PC-9 (cell line): ENCODE measurements at regions of chr5 and their contacts with region 1.

Region 1: DNA sequence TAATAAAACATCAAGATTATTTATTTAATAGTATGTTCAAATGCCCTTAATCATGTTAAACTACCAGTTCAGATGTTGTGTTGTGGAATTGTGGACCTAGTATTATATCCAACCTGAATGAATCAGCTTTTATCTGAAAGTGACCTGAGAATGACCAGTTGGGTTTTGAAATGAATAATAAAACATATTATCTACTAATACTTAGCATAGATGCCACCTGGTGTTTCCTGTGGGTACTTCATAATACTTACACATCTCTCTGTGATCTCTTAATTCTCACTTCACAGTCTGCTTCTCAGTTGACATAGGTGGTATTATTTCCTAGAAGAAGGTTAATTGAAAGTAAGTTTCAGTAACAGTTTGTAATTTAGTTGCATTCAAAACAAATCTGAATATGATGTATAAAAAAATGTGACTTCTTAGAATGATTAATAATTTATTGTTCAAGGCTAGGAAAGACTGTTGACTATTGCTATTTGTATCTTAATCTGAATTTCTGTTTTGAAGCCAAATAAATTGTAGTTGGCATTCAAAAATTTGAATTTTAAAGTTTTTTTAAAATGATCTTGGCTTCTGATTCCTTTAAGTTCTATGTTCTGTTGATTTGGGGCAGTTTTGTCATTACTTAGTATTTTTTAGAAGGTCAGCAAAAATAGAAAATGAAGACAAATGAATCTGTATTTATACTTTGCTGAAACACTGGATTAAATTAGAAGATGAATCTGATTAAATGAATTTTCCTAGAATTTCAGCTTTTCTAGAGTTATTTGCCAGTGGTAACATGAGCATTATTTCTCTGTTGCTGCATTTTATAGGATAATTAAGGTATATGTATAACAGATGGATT is 48.2 kb downstream of the KIF2A start:
- DNase-seq: peak in 1 of 2 experiments; percentile 7
- H3K4me3 ChIP-seq: no peak overlapping the region
- H3K27ac ChIP-seq: peak overlapping the region; percentile 47
- H3K4me1 ChIP-seq: no peaks in the 10 kb centered on the region; the same call in 1 of the 2 replicates
- H3K27me3 ChIP-seq: no peaks in the 10 kb centered on the region
- CTCF ChIP-seq: peak; percentile 78

Region 2: GRCh38 chr5:60699530-60700382 is 1654.5 kb before region 1 on chr5 and contains the start of gene DEPDC1B:
- CTCF ChIA-PET with region 1: no interaction called
- POLR2A ChIA-PET with region 1: interaction called, 14 read pairs
- intact Hi-C with region 1: no loop called
- DNase-seq: peak; percentile 70 to 88
- H3K4me3 ChIP-seq: peak within 1 kb of the TSS; percentile 76
- H3K27ac ChIP-seq: peak within 1 kb of the TSS; percentile 55
- H3K4me1 ChIP-seq: peaks cover 11% of the 10 kb centered on the region; the same call in 1 of the 2 replicates
- H3K27me3 ChIP-seq: no peaks in the 10 kb centered on the region
- CTCF ChIP-seq: no peak; the same call in 1 of the 2 replicates
- total RNA-seq, gene DEPDC1B: 25.6 and 29.2 TPM in 2 replicates

Region 3: GRCh38 chr5:62138607-62139006 is 215.6 kb before region 1 on chr5:
- CTCF ChIA-PET with region 1: no interaction called
- POLR2A ChIA-PET with region 1: no interaction called
- intact Hi-C with region 1: no loop called
- DNase-seq: no peak
- H3K4me3 ChIP-seq: no peak overlapping the region
- H3K27ac ChIP-seq: no peak overlapping the region
- H3K4me1 ChIP-seq: no peaks in the 10 kb centered on the region
- H3K27me3 ChIP-seq: peaks cover 62% of the 10 kb centered on the region
- CTCF ChIP-seq: no peak

Region 4: GRCh38 chr5:62231576-62231975 is 122.7 kb before region 1 on chr5:
- CTCF ChIA-PET with region 1: no interaction called
- POLR2A ChIA-PET with region 1: no interaction called
- intact Hi-C with region 1: loop called (anchors 5 kb)
- DNase-seq: no peak
- H3K4me3 ChIP-seq: no peak overlapping the region
- H3K27ac ChIP-seq: no peak overlapping the region
- H3K4me1 ChIP-seq: peaks cover 10% of the 10 kb centered on the region
- H3K27me3 ChIP-seq: no peaks in the 10 kb centered on the region
- CTCF ChIP-seq: no peak